ENCODE measurements at regions of chr9 and their contacts with region 1.

Region 1: DNA sequence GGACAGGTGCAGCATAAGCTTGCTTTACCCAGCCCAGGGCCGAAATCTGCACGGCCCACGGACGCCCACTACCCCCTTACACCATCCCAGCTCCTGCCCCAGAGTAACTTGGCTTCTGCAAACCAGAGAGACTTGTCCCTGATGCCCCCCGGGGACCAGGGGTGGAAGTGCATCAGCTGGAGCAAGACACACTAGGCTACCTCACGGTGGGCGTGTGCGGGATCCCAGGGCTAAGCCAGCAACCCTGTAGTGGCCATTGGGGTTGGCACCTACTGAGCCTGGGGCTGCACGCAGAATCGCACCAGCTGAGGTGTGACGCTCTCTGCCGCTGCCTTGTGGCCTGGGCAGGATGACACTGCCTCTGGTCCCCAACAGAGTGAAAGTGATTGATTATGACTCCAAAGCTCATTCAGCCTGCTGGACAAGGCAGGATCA is 6.1 kb upstream of the ZNF79 start:
- DNase-seq: peak; percentile 44
- ATAC-seq: peak; percentile 82
- H3K4me3 ChIP-seq: no peak overlapping the region
- H3K27ac ChIP-seq: no peak overlapping the region
- H3K4me1 ChIP-seq: peaks cover 29% of the 10 kb centered on the region
- H3K27me3 ChIP-seq: no peaks in the 10 kb centered on the region
- CTCF ChIP-seq: peak; percentile 68
- EP300 ChIP-seq: no peak
- POLR2A ChIP-seq: no peak
- RAD21 ChIP-seq: peak; percentile 29; the same call in 1 of the 2 replicates

Region 2: DNA sequence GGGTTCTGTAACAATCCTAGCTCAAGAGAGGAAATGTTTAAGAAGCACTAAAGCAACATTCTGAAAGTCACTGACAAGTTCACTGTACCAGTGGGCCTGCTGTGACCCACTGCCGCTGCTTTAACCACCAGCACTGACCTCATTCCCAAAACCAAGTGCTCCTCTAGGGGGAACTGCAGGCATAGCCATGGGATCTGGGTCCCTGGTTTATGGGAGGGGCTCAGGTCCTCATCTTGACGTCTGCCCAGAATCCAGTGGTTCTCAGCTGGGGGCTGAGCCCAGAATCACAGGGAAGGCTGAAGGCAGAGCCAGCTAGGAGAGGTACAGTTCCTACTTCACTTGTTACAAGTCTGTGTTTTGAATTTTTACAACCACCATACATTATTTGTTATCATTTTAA is 57.2 kb before region 1 on chr9:
- CTCF ChIA-PET with region 1: no interaction called
- POLR2A ChIA-PET with region 1: interaction called, 3 read pairs
- in situ Hi-C with region 1: no loop called
- intact Hi-C with region 1: loop called (anchors 1 kb)
- DNase-seq: peak; percentile 68
- ATAC-seq: peak; percentile 94
- H3K4me3 ChIP-seq: no peak overlapping the region
- H3K27ac ChIP-seq: no peak overlapping the region
- H3K4me1 ChIP-seq: no peaks in the 10 kb centered on the region
- H3K27me3 ChIP-seq: no peaks in the 10 kb centered on the region
- CTCF ChIP-seq: peak; percentile 76
- EP300 ChIP-seq: no peak
- POLR2A ChIP-seq: no peak
- RAD21 ChIP-seq: peak; percentile 80

Region 3: DNA sequence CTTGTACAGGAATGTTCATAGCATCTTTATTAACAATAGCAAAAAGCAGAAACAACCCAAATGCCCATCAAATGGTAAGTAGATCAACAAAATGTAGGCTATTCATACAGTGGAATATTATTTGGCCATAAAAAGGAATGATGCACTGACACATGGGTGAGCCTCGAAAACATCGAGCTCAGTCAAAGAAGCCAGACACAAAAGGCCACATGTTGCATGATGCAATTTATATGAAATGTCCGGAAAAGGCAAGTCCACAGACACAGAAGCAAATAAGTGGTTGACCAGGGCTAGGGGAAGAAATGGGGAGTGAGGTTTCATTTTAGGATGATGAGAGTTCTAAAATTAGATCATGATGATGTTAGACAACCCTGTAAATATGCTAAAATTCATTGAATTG is 37.6 kb before region 1 on chr9:
- CTCF ChIA-PET with region 1: no interaction called
- POLR2A ChIA-PET with region 1: no interaction called
- in situ Hi-C with region 1: no loop called
- intact Hi-C with region 1: no loop called
- DNase-seq: no peak
- ATAC-seq: no peak
- H3K4me3 ChIP-seq: no peak overlapping the region
- H3K27ac ChIP-seq: no peak overlapping the region
- H3K4me1 ChIP-seq: no peaks in the 10 kb centered on the region
- H3K27me3 ChIP-seq: no peaks in the 10 kb centered on the region
- CTCF ChIP-seq: no peak
- EP300 ChIP-seq: no peak
- POLR2A ChIP-seq: no peak
- RAD21 ChIP-seq: no peak